ENCODE measurements at regions of chr15 and their contacts with region 1.

Region 1: DNA sequence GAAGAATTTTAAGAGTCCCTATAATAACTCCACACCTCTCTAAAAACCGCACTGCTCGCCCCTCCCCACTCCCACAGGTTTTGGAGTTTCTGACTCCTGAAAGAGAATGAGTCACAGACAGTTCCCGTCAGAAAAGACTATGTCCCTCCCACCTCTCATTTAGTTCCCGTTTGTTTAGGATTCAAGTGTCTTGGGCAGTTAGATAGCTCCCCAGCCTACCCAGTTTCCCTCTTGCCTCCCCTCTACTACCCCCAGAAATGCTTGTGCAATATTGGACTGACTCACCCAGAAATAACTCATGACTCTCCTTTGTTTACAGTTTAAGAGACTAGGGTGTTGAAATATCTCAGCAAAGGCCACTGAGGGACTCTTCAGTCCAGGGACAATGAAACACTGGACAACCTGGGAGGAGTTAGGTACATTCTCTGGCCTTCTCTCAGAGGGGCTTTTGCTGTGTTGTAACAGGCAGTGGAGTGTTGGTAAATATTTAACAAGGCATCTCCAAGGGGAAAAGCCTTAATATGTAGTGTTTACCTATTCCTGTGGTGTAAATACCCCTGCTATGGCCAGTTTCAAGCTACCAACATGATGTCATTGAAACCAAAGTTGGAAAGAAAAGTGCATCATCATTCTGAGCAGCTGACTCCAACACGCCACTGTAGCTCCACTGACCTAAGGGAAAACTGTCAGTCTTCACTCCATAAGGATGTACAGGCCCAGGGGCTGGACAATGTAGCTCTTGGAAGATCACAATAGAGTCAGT is 96.1 kb upstream of the CHD2 start:
- DNase-seq: peak; percentile 100
- H3K4me3 ChIP-seq: no peak overlapping the region
- H3K27ac ChIP-seq: peak overlapping the region; percentile 96
- H3K4me1 ChIP-seq: peaks cover 38% of the 10 kb centered on the region
- H3K27me3 ChIP-seq: no peaks in the 10 kb centered on the region
- CTCF ChIP-seq: no peak

Region 2: DNA sequence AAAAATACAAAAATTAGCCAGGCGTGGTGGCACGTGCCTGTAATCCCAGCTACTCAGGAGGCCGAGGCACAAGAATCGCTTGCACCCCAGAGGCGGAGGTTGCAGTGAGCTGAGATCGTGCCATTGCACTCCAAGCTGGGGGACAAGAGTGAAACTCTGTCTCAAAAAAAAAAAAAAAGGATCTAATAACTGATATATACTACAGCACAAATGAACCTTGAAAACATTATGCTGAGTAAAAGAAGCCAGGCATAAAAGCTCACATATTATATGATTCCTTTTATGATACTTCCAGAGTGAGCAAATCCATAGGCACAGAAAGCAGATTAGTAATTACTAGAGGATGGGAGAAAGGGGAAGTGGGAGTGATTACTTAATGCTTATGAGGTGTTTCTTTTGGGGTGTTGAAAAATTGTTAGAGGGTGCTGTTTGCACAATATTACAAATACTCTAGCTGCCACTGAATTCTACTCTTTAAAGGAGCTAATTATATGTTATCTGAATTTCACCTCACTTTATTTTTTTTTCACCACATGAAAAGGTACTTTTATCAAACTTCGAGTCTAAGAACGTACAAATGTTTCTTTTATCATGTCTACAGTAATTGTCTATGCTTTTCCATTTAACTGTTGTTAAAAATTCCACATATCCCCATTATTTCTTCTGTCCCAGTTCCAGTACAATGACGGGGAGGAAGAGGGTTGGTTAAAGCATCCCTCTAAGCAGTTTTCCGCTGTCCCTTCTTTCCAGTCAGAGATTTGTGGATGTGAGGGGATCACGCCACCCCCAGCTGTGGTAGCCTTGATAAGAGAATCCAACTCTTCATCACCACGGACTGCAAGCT is 70.7 kb before region 1 on chr15:
- CTCF ChIA-PET with region 1: no interaction called
- dilution Hi-C with region 1: no loop called
- in situ Hi-C with region 1: no loop called
- intact Hi-C with region 1: no loop called
- DNase-seq: no peak
- H3K4me3 ChIP-seq: peak overlapping the region; percentile 15 to 52 (median 51)
- H3K27ac ChIP-seq: no peak overlapping the region
- H3K4me1 ChIP-seq: peaks cover 4% of the 10 kb centered on the region
- H3K27me3 ChIP-seq: no peaks in the 10 kb centered on the region
- CTCF ChIP-seq: no peak

Region 3: DNA sequence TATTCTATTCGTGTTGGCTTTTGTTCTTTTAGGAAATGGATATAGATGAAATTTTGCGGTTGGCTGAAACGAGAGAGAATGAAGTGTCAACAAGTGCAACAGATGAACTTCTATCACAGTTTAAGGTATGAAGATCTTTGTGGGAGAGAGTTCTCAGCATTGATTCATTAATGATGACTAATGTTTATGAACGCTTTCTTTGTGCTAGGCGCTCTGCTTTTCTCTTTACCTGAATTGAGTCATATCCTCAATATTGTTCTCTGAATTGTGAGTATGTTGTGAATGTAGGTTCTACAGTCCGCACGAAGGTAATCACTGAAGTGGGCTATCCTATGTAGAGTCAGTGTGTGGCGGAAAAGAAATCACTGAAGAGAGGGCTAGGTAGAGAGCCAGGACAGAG is 177.3 kb after region 1 on chr15:
- CTCF ChIA-PET with region 1: no interaction called
- dilution Hi-C with region 1: no loop called
- in situ Hi-C with region 1: no loop called
- intact Hi-C with region 1: loop called (anchors 5 kb)
- DNase-seq: peak; percentile 96
- H3K4me3 ChIP-seq: peak overlapping the region in 2 of 3 experiments; percentile 8 to 9
- H3K27ac ChIP-seq: peak overlapping the region; percentile 97
- H3K4me1 ChIP-seq: peaks cover 42% of the 10 kb centered on the region
- H3K27me3 ChIP-seq: no peaks in the 10 kb centered on the region
- CTCF ChIP-seq: no peak

Measured in mammary epithelial cell (primary cell).